GM12878 (cell line): ENCODE measurements at regions of chr7 and their contacts with region 1.

Region 1: GRCh38 chr7:70060298-70061068 is 462.2 kb downstream of the AUTS2 start:
- DNase-seq: no peak
- ATAC-seq: no peak; the same call in 2 of the 3 replicates
- H3K4me3 ChIP-seq: no peak overlapping the region
- H3K27ac ChIP-seq: no peak overlapping the region
- H3K4me1 ChIP-seq: no peaks in the 10 kb centered on the region
- H3K27me3 ChIP-seq: no peaks in the 10 kb centered on the region
- CTCF ChIP-seq: no peak
- EP300 ChIP-seq: no peak
- POLR2A ChIP-seq: no peak
- RAD21 ChIP-seq: no peak

Region 2: DNA sequence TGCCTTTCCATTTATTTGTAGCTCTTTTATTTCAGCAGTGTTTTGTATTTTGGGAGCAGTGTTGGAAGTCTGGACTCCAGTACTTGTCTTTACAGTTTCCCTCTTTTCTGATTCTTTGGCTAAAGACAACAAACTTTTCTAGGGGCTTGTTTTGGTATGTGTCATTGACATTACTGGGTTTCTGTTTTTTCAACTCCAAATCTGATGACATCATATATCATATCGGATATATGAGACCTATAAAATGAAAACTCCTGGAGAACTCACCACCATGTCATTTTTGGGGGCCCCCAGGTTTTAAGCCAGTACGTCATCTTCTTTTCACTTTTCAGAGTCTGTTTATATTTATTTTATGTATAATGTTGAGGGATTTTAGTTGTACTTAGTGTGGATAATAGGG is 82.9 kb before region 1 on chr7:
- CTCF ChIA-PET with region 1: no interaction called
- POLR2A ChIA-PET with region 1: no interaction called
- RAD21 ChIA-PET with region 1: no interaction called
- SMC1A ChIA-PET with region 1: no interaction called
- in situ Hi-C with region 1: no loop called
- intact Hi-C with region 1: no loop called
- DNase-seq: no peak
- ATAC-seq: no peak
- H3K4me3 ChIP-seq: no peak overlapping the region
- H3K27ac ChIP-seq: no peak overlapping the region
- H3K4me1 ChIP-seq: no peaks in the 10 kb centered on the region
- H3K27me3 ChIP-seq: no peaks in the 10 kb centered on the region
- CTCF ChIP-seq: no peak
- EP300 ChIP-seq: no peak
- POLR2A ChIP-seq: no peak
- RAD21 ChIP-seq: no peak

Region 3: DNA sequence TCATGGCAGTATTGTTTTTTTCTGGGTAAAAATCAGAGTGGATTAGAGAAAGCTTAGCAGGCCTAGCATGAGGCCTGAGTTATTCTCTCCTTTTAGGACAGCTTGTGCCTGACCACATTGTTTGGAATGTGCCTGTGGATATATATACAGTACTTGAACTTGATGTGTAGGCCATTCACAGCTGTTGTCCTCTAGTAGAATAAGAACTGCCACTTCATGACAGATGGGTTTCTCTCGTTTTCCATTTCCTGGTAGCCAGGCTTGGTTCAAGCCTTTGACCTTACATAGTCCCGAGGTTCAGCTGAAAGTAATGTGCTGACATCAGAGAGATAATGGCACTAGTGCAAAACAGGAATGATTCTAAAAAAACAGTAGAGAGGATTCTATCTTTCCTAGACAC is 11.7 kb after region 1 on chr7:
- CTCF ChIA-PET with region 1: interaction called, 4 read pairs
- POLR2A ChIA-PET with region 1: no interaction called
- RAD21 ChIA-PET with region 1: interaction called, 6 read pairs
- SMC1A ChIA-PET with region 1: interaction called, 14 read pairs
- in situ Hi-C with region 1: no loop called
- intact Hi-C with region 1: no loop called
- DNase-seq: no peak
- ATAC-seq: peak; percentile 56
- H3K4me3 ChIP-seq: no peak overlapping the region
- H3K27ac ChIP-seq: no peak overlapping the region
- H3K4me1 ChIP-seq: peaks cover 5% of the 10 kb centered on the region
- H3K27me3 ChIP-seq: no peaks in the 10 kb centered on the region
- CTCF ChIP-seq: no peak
- EP300 ChIP-seq: no peak
- POLR2A ChIP-seq: no peak
- RAD21 ChIP-seq: no peak

Region 4: GRCh38 chr7:70098133-70098561 is 37.7 kb after region 1 on chr7:
- CTCF ChIA-PET with region 1: no interaction called
- POLR2A ChIA-PET with region 1: no interaction called
- RAD21 ChIA-PET with region 1: no interaction called
- SMC1A ChIA-PET with region 1: no interaction called
- in situ Hi-C with region 1: no loop called
- intact Hi-C with region 1: no loop called
- DNase-seq: no peak
- ATAC-seq: no peak
- H3K4me3 ChIP-seq: no peak overlapping the region
- H3K27ac ChIP-seq: no peak overlapping the region
- H3K4me1 ChIP-seq: no peaks in the 10 kb centered on the region
- H3K27me3 ChIP-seq: no peaks in the 10 kb centered on the region
- CTCF ChIP-seq: no peak
- EP300 ChIP-seq: no peak
- POLR2A ChIP-seq: no peak
- RAD21 ChIP-seq: no peak